A673 (cell line): ENCODE measurements at regions of chr3 and their contacts with region 1.

Region 1: DNA sequence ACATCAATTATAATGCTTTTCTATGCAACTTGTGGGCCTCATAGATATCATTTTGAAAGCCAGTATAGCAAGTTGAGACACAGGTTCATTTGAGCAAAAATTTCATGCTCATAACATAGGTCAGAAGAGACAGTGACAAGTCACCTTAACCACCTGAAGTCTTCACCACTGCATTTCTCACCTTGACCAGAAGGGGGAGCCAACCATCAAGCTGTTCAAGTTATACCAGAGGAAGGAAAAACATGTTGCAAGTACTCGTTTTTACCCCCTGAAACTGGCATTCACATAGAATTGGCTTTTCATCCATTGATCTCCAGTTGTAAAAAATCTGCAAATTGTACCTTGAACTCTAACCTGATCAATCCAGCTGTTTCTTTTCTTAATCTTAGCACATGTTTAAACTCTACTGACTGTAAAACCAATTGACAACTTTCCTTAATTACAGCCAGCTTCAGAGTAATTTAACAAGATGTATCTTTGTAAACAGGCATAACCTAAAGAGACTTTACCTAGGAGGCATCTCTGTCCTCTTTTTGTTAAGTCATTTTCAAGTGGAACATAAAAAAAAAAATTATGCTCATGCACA is 1.4 kb downstream of the LMOD3 start:
- DNase-seq: peak; percentile 52
- H3K4me3 ChIP-seq: no peak overlapping the region
- H3K27ac ChIP-seq: no peak overlapping the region
- H3K4me1 ChIP-seq: no peaks in the 10 kb centered on the region
- H3K27me3 ChIP-seq: no peaks in the 10 kb centered on the region
- CTCF ChIP-seq: peak; percentile 70

Region 2: GRCh38 chr3:67976663-67977062 is 1144.3 kb before region 1 on chr3:
- CTCF ChIA-PET with region 1: no interaction called
- POLR2A ChIA-PET with region 1: no interaction called
- intact Hi-C with region 1: no loop called
- DNase-seq: no peak
- H3K4me3 ChIP-seq: no peak overlapping the region
- H3K27ac ChIP-seq: no peak overlapping the region
- H3K4me1 ChIP-seq: no peaks in the 10 kb centered on the region
- H3K27me3 ChIP-seq: no peaks in the 10 kb centered on the region
- CTCF ChIP-seq: no peak

Region 3: GRCh38 chr3:69306239-69307185 is 185.5 kb after region 1 on chr3:
- CTCF ChIA-PET with region 1: interaction called, 5 read pairs
- POLR2A ChIA-PET with region 1: no interaction called
- intact Hi-C with region 1: loop called (anchors 2 kb)
- DNase-seq: peak; percentile 66
- H3K4me3 ChIP-seq: no peak overlapping the region
- H3K27ac ChIP-seq: no peak overlapping the region
- H3K4me1 ChIP-seq: no peaks in the 10 kb centered on the region
- H3K27me3 ChIP-seq: no peaks in the 10 kb centered on the region
- CTCF ChIP-seq: peak; percentile 69

Region 4: GRCh38 chr3:69463531-69463930 is 342.6 kb after region 1 on chr3:
- CTCF ChIA-PET with region 1: no interaction called
- POLR2A ChIA-PET with region 1: no interaction called
- intact Hi-C with region 1: no loop called
- DNase-seq: no peak
- H3K4me3 ChIP-seq: no peak overlapping the region
- H3K27ac ChIP-seq: no peak overlapping the region
- H3K4me1 ChIP-seq: no peaks in the 10 kb centered on the region
- H3K27me3 ChIP-seq: no peaks in the 10 kb centered on the region
- CTCF ChIP-seq: no peak

Region 5: DNA sequence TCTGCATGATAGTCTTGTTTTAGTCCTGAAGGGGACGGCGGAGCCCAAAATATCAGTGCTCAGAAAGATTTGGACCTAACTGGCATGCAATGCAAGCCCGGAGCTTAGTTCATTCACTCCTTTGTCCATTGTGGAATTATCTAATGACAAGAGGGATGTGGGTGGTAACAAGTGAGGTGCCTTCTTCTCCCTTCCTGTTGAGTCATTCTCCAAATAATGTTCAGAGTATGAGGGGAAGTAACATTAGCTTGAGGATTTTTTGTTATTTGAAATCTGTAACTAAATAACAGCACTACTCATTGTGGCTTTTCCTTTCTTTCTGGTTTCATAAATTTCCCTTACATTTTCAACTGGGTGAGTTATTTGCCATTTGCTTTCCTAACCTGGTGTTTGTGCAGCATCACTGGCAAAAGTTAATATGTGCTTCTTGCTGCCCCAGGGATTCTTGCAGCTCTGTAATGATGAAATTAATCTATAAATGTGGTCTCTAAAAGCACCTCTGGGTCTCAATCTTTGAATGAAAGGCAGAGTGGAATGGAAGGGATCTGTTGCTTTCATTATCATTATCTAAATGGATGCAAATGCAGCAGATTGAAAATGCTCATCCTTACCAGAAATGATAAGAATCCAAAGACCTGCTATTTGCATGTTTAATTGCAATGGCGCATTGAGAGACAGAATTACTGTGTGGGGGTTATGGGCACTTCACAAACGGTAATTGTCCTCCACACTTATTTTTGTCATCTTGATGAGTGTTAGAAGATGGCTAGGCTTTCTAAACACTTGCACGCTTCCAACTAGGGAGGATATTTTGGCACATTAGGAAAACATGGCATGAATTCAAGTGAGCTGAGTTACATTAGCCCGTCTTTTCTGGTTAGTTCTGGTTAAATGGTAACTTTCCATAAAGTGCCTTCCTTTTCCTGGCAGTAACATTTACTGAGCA is 528.4 kb after region 1 on chr3:
- CTCF ChIA-PET with region 1: no interaction called
- POLR2A ChIA-PET with region 1: no interaction called
- intact Hi-C with region 1: no loop called
- DNase-seq: no peak
- H3K4me3 ChIP-seq: no peak overlapping the region
- H3K27ac ChIP-seq: no peak overlapping the region
- H3K4me1 ChIP-seq: no peaks in the 10 kb centered on the region
- H3K27me3 ChIP-seq: no peaks in the 10 kb centered on the region
- CTCF ChIP-seq: no peak